ENCODE measurements at regions of chr11 and their contacts with region 1.

Region 1: GRCh38 chr11:83071567-83072349 is at the start of gene RAB30:
- DNase-seq: peak; percentile 99 to 100
- H3K4me3 ChIP-seq: peak within 1 kb of the TSS; percentile 62
- H3K4me3 Mint-ChIP-seq: no peak within 1 kb of the TSS
- H3K27ac Mint-ChIP-seq: no peak within 1 kb of the TSS
- H3K4me1 ChIP-seq: peaks cover 33% of the 10 kb centered on the region
- H3K4me1 Mint-ChIP-seq: peaks cover 26% of the 10 kb centered on the region
- H3K27me3 ChIP-seq: no peaks in the 10 kb centered on the region
- H3K27me3 Mint-ChIP-seq: no peaks in the 10 kb centered on the region
- CTCF ChIP-seq: no peak
- total RNA-seq, gene RAB30: 13.0 and 13.5 TPM in 2 replicates

Region 2: GRCh38 chr11:82906244-82906654 is 165.5 kb before region 1 on chr11:
- CTCF ChIA-PET with region 1: interaction called, 10 read pairs
- POLR2A ChIA-PET with region 1: interaction called, 19 read pairs
- intact Hi-C with region 1: loop called (anchors 1 kb)
- DNase-seq: no peak
- H3K4me3 ChIP-seq: no peak overlapping the region
- H3K4me3 Mint-ChIP-seq: no peak overlapping the region
- H3K27ac Mint-ChIP-seq: no peak overlapping the region
- H3K4me1 ChIP-seq: no peaks in the 10 kb centered on the region; the same call in 1 of the 2 replicates
- H3K4me1 Mint-ChIP-seq: peaks cover 21% of the 10 kb centered on the region
- H3K27me3 ChIP-seq: no peaks in the 10 kb centered on the region
- H3K27me3 Mint-ChIP-seq: no peaks in the 10 kb centered on the region
- CTCF ChIP-seq: peak; percentile 59 to 75

Region 3: DNA sequence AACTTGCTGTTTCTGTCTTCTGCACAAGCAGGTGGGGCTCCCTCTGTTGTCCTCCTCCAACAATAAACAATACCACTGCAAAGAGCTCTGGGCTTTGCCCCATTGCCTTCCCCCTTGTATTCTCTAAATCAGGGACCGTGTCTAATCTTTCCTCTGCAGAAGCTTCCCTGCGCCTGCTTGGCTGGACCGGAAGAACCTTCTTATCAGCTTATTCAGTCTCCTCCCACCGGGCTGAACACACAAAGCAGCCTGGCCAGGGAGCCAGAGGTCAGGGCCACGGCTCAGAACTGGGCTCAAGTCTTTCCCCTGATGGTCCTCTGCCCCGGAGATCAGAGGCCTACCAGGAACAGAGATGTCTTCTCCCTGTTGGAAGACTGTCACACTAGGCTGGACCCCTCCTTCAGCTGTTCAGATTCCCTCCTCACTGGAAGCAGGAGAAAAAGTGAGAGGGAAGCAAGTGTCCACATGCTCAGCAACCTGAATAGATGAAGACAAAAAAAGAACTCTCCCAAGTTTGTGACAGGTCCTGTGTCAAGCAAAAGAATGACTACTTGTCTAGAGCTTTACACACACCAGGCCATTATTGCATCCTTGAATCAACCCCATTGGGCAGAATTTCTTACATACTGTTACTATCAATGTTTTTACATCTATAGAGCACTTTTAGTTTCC is 63.7 kb before region 1 on chr11:
- CTCF ChIA-PET with region 1: no interaction called
- POLR2A ChIA-PET with region 1: no interaction called
- intact Hi-C with region 1: loop called (anchors 1 kb)
- DNase-seq: peak; percentile 79 to 84
- H3K4me3 ChIP-seq: no peak overlapping the region
- H3K4me3 Mint-ChIP-seq: peak overlapping the region; percentile 54
- H3K27ac Mint-ChIP-seq: peak overlapping the region; percentile 76
- H3K4me1 ChIP-seq: peaks cover 25% of the 10 kb centered on the region
- H3K4me1 Mint-ChIP-seq: peaks cover 30% of the 10 kb centered on the region
- H3K27me3 ChIP-seq: no peaks in the 10 kb centered on the region
- H3K27me3 Mint-ChIP-seq: no peaks in the 10 kb centered on the region
- CTCF ChIP-seq: no peak

Region 4: DNA sequence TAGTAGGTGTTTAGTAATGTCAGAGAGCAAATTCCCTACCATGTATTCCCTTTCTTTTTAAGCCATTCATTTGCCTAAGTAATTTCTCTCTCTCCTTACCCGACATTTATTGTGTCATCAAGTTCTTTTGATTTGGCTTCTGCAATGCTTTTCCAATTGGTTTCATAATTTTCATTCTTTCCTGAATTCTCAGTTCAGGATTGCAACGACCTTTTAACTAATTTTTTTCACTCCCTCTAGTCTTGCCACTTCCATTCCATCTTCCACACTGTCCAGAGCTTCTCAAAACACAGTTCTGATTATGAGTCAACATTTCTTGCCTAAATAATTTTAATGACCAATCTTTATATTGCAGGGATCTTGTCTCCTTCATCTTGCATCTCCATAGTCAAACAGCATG is 41.1 kb after region 1 on chr11:
- CTCF ChIA-PET with region 1: no interaction called
- POLR2A ChIA-PET with region 1: no interaction called
- intact Hi-C with region 1: no loop called
- DNase-seq: no peak
- H3K4me3 ChIP-seq: no peak overlapping the region
- H3K4me3 Mint-ChIP-seq: no peak overlapping the region
- H3K27ac Mint-ChIP-seq: no peak overlapping the region
- H3K4me1 ChIP-seq: no peaks in the 10 kb centered on the region; the same call in 1 of the 2 replicates
- H3K4me1 Mint-ChIP-seq: peaks cover 6% of the 10 kb centered on the region
- H3K27me3 ChIP-seq: no peaks in the 10 kb centered on the region
- H3K27me3 Mint-ChIP-seq: no peaks in the 10 kb centered on the region
- CTCF ChIP-seq: no peak

Region 5: DNA sequence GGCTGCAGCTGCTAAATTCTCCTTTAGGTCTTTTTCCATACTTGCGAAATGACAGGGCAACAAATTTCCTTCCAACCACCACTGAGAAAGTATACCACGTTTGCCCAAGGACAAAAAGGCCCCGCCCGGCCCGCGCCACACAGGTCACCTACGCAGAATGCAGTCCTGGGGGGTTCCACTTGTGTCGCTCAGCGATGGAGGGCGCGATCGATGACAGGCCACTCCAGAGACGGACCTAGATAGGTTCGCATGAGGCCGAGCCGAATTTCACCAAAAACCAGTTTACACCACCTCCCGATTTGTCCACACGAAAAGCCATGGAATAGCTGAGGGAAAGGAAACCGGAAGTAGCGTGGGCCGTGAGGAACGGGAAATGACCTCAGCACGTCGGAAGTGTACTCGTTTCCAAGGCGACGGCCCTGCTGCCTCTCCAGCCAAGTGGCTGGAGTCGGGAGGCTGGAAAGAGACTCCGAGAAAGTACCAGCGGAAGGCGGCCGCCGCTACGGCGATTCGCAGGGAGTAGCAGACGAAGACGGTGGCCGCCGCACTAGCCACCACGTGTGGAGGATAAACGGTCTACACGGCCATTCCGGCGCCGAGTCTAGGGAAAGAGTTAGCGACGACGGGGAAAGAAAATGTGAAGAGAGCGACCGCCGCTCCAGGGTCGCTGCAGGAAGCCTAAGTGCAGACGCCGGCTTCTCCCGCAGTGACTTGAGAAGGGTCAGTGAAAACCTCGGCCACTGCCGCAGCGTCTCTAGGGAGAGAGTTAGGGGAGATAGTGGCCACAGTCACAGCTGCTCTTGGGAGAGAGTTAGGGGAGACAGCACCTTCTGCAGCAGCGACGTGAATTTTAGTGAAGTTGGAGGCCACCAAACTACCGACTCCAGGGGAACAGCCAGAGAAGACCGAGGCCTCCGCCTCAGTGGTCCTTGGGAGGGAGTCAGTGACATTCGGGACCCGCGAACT is 121.8 kb after region 1 on chr11 and contains the start of gene ANKRD42:
- CTCF ChIA-PET with region 1: interaction called, 10 read pairs
- POLR2A ChIA-PET with region 1: interaction called, 5 read pairs
- intact Hi-C with region 1: loop called (anchors 1 kb)
- DNase-seq: peak; percentile 96 to 97
- H3K4me3 ChIP-seq: peak within 1 kb of the TSS; percentile 77
- H3K4me3 Mint-ChIP-seq: peak within 1 kb of the TSS; percentile 80
- H3K27ac Mint-ChIP-seq: peak within 1 kb of the TSS; percentile 89
- H3K4me1 ChIP-seq: peaks cover 7% of the 10 kb centered on the region; the same call in 1 of the 2 replicates
- H3K4me1 Mint-ChIP-seq: peaks cover 30% of the 10 kb centered on the region
- H3K27me3 ChIP-seq: no peaks in the 10 kb centered on the region
- H3K27me3 Mint-ChIP-seq: no peaks in the 10 kb centered on the region
- CTCF ChIP-seq: peak in 1 of 2 experiments; percentile 4
- total RNA-seq, gene ANKRD42: 8.3 and 9.0 TPM in 2 replicates

Region 6: GRCh38 chr11:83713701-83714100 is 641.9 kb after region 1 on chr11:
- CTCF ChIA-PET with region 1: no interaction called
- POLR2A ChIA-PET with region 1: no interaction called
- intact Hi-C with region 1: loop called (anchors 10 kb)
- DNase-seq: no peak
- H3K4me3 ChIP-seq: no peak overlapping the region
- H3K4me3 Mint-ChIP-seq: no peak overlapping the region
- H3K27ac Mint-ChIP-seq: peak overlapping the region; percentile 69
- H3K4me1 ChIP-seq: peaks cover 62% of the 10 kb centered on the region
- H3K4me1 Mint-ChIP-seq: peaks cover 64% of the 10 kb centered on the region
- H3K27me3 ChIP-seq: no peaks in the 10 kb centered on the region
- H3K27me3 Mint-ChIP-seq: no peaks in the 10 kb centered on the region
- CTCF ChIP-seq: no peak

Measured in Caco-2 (cell line).